Posterior vena cava (tissue), 2 donors: ENCODE measurements at regions of chr4 and their contacts with region 1.

Region 1: GRCh38 chr4:70930530-70931256 is 28.5 kb downstream of the MOB1B start:
- DNase-seq: no peak

Region 2: DNA sequence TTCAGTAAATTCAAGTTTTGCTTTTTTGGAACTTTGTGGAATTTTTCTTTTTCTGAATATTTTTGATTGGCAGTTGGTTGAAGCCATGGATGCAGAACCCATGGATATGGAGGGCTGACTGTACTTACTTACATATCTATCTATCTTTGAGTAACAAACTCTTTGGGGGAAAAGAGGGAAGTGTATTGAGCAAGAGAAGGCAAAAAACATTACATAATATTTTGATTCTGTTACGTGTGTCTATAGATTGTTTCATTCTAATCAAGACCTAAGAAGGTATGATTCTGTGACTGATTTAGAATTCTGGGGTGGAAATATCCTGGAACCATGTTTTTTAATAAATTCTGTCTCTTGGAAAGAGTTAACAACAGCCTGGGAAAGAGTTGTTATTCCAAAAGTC is 122.5 kb before region 1 on chr4:
- intact Hi-C with region 1: no loop called
- DNase-seq: no peak

Region 3: DNA sequence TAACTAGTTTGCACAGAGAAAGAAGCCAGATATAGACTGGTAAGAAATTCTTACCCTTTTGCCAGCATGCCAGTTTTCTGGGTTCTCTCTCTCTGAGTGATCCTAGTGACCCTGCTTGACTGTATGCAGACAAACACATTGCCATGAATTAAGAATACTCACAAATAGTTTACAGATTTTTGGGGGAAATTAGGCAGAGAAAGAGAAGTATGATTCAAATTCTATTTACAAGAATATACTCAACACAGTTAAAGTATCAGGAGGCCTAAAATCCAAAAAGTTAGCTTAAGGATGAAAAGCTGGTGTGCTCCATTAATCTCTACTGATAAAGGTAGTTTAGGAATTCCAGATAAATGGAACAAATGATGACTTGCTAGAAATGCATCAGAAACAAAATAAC is 10.1 kb before region 1 on chr4:
- intact Hi-C with region 1: loop called in 1 of 2 experiments (anchors 1 kb)
- DNase-seq: no peak

Region 4: GRCh38 chr4:71430609-71431008 is 499.9 kb after region 1 on chr4:
- intact Hi-C with region 1: no loop called
- DNase-seq: no peak

Region 5: GRCh38 chr4:72073816-72074215 is 1143.1 kb after region 1 on chr4:
- intact Hi-C with region 1: no loop called
- DNase-seq: no peak